Lower leg skin (tissue), 4 donors: ENCODE measurements at regions of chr15 and their contacts with region 1.

Region 1: GRCh38 chr15:65641768-65642475 is 20.2 kb downstream of the SLC24A1 start:
- DNase-seq: no peak
- H3K4me3 ChIP-seq: no peak overlapping the region
- CTCF ChIP-seq: no peak
- POLR2A ChIP-seq: no peak

Region 2: GRCh38 chr15:65723876-65724275 is 82.0 kb after region 1 on chr15:
- intact Hi-C with region 1: no loop called
- DNase-seq: no peak
- H3K4me3 ChIP-seq: no peak overlapping the region
- CTCF ChIP-seq: no peak
- POLR2A ChIP-seq: no peak

Region 3: GRCh38 chr15:65856821-65857455 is 215.0 kb after region 1 on chr15:
- intact Hi-C with region 1: loop called (anchors 10 kb)
- DNase-seq: peak; percentile 71 to 90
- H3K4me3 ChIP-seq: no peak overlapping the region
- CTCF ChIP-seq: no peak
- POLR2A ChIP-seq: no peak

Region 4: DNA sequence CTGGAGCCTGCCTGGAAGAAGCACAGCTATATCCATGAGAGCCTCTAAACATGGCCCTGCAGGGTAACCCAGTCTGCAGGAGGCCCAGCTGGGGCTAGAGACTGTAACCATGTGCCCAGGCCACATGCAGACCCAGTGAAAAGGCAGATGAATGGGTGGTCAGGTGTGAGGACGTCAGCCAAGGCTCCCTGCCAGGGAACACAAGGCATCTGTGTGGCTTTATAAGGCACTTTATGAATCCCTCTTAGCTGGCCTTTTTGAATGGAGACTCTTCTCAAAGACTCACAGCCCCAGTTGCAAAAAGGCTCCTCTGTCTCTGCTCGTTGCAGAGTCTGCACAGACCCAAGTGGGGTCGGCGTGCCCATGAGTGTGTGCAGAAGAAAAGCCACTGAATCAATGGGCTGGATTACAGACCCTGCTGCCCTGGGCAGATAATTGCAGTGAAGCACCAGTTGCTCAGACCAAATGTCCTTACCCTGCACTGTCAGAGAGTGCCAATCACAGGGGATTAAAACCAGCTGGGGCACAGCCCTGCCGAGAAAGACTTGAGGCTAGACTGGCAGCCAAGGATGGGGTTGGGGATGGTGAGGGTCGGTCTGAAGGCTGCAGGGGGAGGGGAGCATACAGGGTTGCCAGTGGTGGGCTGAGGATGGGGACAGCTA is 381.5 kb after region 1 on chr15:
- intact Hi-C with region 1: no loop called
- DNase-seq: no peak
- H3K4me3 ChIP-seq: no peak overlapping the region
- CTCF ChIP-seq: no peak
- POLR2A ChIP-seq: no peak